Ascending aorta (tissue), 2 donors: ENCODE measurements at regions of chr5 and their contacts with region 1.

Region 1: GRCh38 chr5:173293817-173294672 is 34.2 kb downstream of the STC2 start:
- DNase-seq: peak in 1 of 2 donors; percentile 83
- H3K4me3 ChIP-seq: peak overlapping the region in 1 of 2 donors; percentile 47
- H3K27ac ChIP-seq: no peak overlapping the region
- H3K4me1 ChIP-seq: no peaks in the 10 kb centered on the region
- H3K27me3 ChIP-seq: no peaks in the 10 kb centered on the region
- CTCF ChIP-seq: peak; percentile 77 to 91 (median 84)

Region 2: GRCh38 chr5:172334196-172334595 is 959.8 kb before region 1 on chr5:
- intact Hi-C with region 1: no loop called
- DNase-seq: no peak
- H3K4me3 ChIP-seq: no peak overlapping the region
- H3K27ac ChIP-seq: no peak overlapping the region
- H3K4me1 ChIP-seq: no peaks in the 10 kb centered on the region
- H3K27me3 ChIP-seq: no peaks in the 10 kb centered on the region
- CTCF ChIP-seq: no peak

Region 3: GRCh38 chr5:173094012-173094661 is 199.9 kb before region 1 on chr5:
- intact Hi-C with region 1: no loop called
- DNase-seq: no peak
- H3K4me3 ChIP-seq: no peak overlapping the region
- H3K27ac ChIP-seq: peak overlapping the region; percentile 50 to 64
- H3K4me1 ChIP-seq: peaks cover 0 to 30% of the 10 kb centered on the region in 2 donors
- H3K27me3 ChIP-seq: no peaks in the 10 kb centered on the region
- CTCF ChIP-seq: no peak

Region 4: GRCh38 chr5:173331956-173332479 is 38.0 kb after region 1 on chr5:
- intact Hi-C with region 1: loop called (anchors 1 kb)
- DNase-seq: peak; percentile 43 to 87
- H3K4me3 ChIP-seq: no peak overlapping the region
- H3K27ac ChIP-seq: no peak overlapping the region
- H3K4me1 ChIP-seq: peaks cover 6 to 24% of the 10 kb centered on the region in 2 donors
- H3K27me3 ChIP-seq: peaks cover 2% of the 10 kb centered on the region
- CTCF ChIP-seq: peak; percentile 61 to 79 (median 75)

Region 5: GRCh38 chr5:173498286-173498685 is 204.2 kb after region 1 on chr5:
- intact Hi-C with region 1: loop called (anchors 5 kb)
- DNase-seq: no peak
- H3K4me3 ChIP-seq: peak overlapping the region in 1 of 2 donors; percentile 26
- H3K27ac ChIP-seq: peak overlapping the region in 1 of 2 donors; percentile 74
- H3K4me1 ChIP-seq: peaks cover 8 to 15% of the 10 kb centered on the region in 2 donors
- H3K27me3 ChIP-seq: no peaks in the 10 kb centered on the region
- CTCF ChIP-seq: no peak

Region 6: GRCh38 chr5:173573126-173573960 is 279.3 kb after region 1 on chr5:
- intact Hi-C with region 1: loop called (anchors 1 kb)
- DNase-seq: peak in 1 of 2 donors; percentile 80
- H3K4me3 ChIP-seq: peak overlapping the region; percentile 9 to 32
- H3K27ac ChIP-seq: no peak overlapping the region
- H3K4me1 ChIP-seq: peaks cover 0 to 3% of the 10 kb centered on the region in 2 donors
- H3K27me3 ChIP-seq: no peaks in the 10 kb centered on the region
- CTCF ChIP-seq: peak; percentile 86 to 98 (median 96)